ENCODE measurements at regions of chr3 and their contacts with region 1.

Region 1: DNA sequence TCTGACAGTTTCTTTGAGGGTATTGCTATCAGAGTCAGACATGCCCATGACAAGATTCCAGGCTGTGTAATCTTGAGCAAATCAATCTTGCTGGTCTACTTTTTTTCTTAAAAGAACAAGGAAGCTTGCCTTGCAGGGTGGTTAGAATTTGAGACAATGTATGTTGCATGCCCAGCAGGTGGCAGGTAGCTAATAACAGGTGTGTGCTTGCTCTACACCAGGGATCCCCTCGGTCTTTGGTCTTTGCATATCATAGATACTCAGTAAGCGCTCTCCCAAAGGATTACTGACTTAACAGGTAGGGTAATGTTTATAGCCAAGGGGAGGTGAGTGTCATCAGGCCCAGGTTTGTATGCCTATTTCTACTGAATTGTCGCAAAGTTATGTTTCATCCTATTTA is 37.3 kb downstream of the CACNA1D start:
- DNase-seq: no peak
- H3K4me3 ChIP-seq: no peak overlapping the region
- H3K27ac ChIP-seq: no peak overlapping the region
- H3K4me1 ChIP-seq: no peaks in the 10 kb centered on the region
- H3K27me3 ChIP-seq: peaks cover 4% of the 10 kb centered on the region
- CTCF ChIP-seq: peak; percentile 16 to 51

Region 2: DNA sequence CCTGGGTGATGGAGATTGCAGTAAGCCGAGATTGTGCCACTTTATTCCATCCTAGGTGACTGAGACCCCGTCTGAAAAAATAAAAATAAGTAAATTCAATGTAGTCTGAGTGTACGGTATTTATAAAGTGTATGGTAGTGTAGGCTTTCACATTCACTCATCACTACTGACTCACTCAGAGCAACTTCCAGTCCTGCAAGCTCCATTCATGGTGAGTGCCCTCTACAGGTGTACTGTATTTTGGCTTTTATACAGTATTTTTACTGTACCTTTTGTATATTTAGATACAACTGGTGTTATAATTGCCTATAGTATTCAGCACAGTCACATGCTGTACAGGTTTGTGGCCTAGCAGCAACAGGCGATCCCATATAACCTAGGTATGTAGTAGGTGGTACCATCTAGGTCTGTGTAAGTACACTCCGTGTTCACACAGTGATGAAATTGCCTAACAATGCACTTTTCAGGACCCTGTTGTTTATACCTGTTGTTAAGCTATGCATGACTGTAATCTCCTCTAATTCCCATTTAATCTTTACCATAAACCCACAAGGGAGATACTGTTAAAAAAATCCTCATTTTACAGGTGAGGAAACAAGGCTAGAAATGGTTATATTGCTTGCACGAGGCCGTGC is 18.1 kb before region 1 on chr3:
- CTCF ChIA-PET with region 1: no interaction called
- dilution Hi-C with region 1: no loop called
- in situ Hi-C with region 1: no loop called
- intact Hi-C with region 1: no loop called
- DNase-seq: peak; percentile 35
- H3K4me3 ChIP-seq: no peak overlapping the region
- H3K27ac ChIP-seq: no peak overlapping the region
- H3K4me1 ChIP-seq: no peaks in the 10 kb centered on the region
- H3K27me3 ChIP-seq: no peaks in the 10 kb centered on the region
- CTCF ChIP-seq: peak; percentile 41 to 50

Region 3: GRCh38 chr3:53581671-53582070 is 49.9 kb after region 1 on chr3:
- CTCF ChIA-PET with region 1: no interaction called
- dilution Hi-C with region 1: loop called (anchors 5 kb)
- in situ Hi-C with region 1: no loop called
- intact Hi-C with region 1: no loop called
- DNase-seq: peak; percentile 71
- H3K4me3 ChIP-seq: no peak overlapping the region
- H3K27ac ChIP-seq: no peak overlapping the region
- H3K4me1 ChIP-seq: peaks cover 22% of the 10 kb centered on the region
- H3K27me3 ChIP-seq: no peaks in the 10 kb centered on the region
- CTCF ChIP-seq: no peak